Activated CD8-positive, alpha-beta memory T cell treated with anti-CD3 and anti-CD28 coated beads, Interleukin-2, amount 10 ng/mL, durations not matched to agents 7 days and 5 days (primary cell): ENCODE measurements at regions of chr15 and their contacts with region 1.

Region 1: DNA sequence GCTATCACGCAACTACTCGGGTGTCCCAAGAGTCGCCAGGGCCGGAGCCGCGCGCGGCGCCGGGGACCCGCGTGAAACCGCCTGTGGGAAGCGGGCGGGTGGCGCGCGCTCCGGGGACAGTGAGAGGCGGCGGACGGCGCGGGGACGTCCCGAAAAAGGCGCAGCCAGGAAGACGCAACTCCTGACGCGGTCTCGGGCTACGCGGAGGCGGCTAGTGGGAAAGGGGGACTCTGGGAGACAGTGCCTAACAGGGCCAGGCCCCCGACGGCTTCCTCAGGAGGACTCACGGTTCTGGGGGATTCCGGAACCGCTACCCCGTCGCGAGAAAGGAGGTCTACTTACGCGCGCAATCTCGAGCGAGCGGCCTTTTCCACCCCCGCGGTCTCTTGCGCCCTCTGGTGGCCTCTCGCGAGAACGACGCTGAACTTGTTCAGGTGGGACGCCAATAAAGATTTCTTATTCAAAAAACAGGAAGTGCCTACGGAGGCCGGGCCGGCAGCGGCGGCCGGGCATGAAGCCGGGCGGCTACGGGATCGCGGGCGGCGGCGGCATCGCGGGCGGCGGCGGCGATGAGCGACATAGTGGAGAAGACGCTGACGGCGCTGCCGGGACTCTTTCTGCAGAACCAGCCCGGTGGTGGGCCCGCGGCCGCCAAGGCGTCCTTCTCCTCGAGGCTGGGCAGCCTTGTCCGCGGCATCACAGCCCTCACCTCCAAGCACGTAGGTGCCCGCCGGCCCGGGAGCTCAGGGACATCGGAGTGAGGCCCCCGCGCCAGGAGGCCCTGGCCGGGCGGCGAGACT is at the start of gene AP4E1:
- DNase-seq: peak; percentile 95
- ATAC-seq: peak; percentile 66
- H3K4me3 Mint-ChIP-seq: peak within 1 kb of the TSS; percentile 91
- H3K27ac Mint-ChIP-seq: peak within 1 kb of the TSS; percentile 99
- H3K4me1 Mint-ChIP-seq: peaks cover 33% of the 10 kb centered on the region
- H3K27me3 Mint-ChIP-seq: no peaks in the 10 kb centered on the region
- total RNA-seq, gene AP4E1: 14.7 to 18.4 TPM

Region 2: GRCh38 chr15:50876989-50877360 is 31.4 kb before region 1 on chr15:
- CTCF ChIA-PET with region 1: interaction called, 12 read pairs
- DNase-seq: peak; percentile 83
- ATAC-seq: peak; percentile 20
- H3K4me3 Mint-ChIP-seq: peak overlapping the region; percentile 67
- H3K27ac Mint-ChIP-seq: peak overlapping the region; percentile 84
- H3K4me1 Mint-ChIP-seq: peaks cover 54% of the 10 kb centered on the region
- H3K27me3 Mint-ChIP-seq: peaks cover 12% of the 10 kb centered on the region

Region 3: DNA sequence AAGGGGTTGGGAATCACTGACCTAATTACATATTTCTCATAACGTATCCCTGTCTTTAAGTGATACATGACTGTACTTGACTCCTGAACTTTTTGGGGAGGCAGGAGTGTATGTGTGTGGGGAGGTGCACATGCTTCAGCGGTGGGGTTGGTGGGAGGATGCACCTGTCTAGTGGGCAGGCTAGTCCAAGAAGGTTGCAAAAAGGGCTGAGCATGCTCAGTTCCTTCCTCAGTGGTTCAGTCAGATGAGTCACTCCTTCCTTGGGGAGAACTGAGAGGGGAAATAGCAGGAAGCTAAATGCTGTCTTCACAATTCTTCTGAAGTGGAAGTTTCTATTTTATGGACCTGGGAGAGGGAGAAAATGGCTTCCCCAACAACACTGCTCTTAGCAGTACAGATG is 24.5 kb before region 1 on chr15:
- CTCF ChIA-PET with region 1: interaction called, 29 read pairs
- DNase-seq: peak; percentile 73
- ATAC-seq: peak; percentile 28
- H3K4me3 Mint-ChIP-seq: peak overlapping the region; percentile 7
- H3K27ac Mint-ChIP-seq: peak overlapping the region; percentile 95
- H3K4me1 Mint-ChIP-seq: peaks cover 68% of the 10 kb centered on the region
- H3K27me3 Mint-ChIP-seq: no peaks in the 10 kb centered on the region